ENCODE measurements at regions of chr19 and their contacts with region 1.

Region 1: DNA sequence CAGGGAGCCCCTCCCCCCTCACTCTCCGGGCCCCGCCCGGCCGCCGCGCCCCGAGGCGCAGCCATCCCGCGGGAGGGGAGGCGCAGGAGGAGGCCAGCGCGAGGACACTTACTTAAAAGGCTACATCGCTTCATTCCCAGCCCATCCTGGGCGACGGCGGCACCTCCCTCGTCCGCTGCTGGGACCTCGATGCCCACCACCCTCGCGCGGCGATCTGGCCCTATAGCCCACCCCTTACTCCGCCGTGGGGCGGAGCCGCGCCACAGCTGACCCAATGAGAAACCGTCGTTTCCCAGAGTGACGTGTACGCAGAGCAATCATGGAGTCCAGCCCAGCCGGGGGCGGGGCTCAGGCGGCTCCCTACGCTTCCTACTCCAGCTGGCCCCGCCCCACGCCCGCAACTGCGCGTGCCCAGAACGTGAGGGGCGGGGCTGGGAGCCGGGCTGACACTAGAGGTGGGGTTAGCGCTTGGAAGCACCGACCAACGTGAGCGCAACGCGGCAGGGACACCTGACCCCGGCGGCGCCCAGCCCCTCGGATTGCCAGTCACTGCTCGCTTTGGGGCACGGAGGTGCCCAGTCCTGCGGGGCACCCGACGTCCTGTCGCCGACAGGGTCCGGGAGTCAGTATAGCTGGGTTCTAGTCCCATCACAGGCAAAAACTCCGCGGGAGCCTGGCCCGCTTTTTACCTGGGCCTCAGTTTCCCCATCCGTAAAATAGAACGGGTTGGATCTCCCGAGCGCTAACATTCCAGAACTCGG is at the start of gene ANKRD27:
- DNase-seq: peak; percentile 97 to 99 (median 98)
- H3K4me3 ChIP-seq: peak within 1 kb of the TSS; percentile 75 to 81
- H3K4me3 Mint-ChIP-seq: peak within 1 kb of the TSS; percentile 91 to 98 (median 96)
- H3K27ac ChIP-seq: peak within 1 kb of the TSS; percentile 68
- H3K27ac Mint-ChIP-seq: peak within 1 kb of the TSS; percentile 77 to 95 (median 91)
- H3K4me1 ChIP-seq: peaks cover 45% of the 10 kb centered on the region
- H3K4me1 Mint-ChIP-seq: peaks cover 21 to 52% (median 35%) of the 10 kb centered on the region in 4 donors
- H3K27me3 ChIP-seq: no peaks in the 10 kb centered on the region
- H3K27me3 Mint-ChIP-seq: peaks cover 6 to 7% of the 10 kb centered on the region in 2 donors
- total RNA-seq, gene ANKRD27: 49.6 to 51.2 TPM

Region 2: DNA sequence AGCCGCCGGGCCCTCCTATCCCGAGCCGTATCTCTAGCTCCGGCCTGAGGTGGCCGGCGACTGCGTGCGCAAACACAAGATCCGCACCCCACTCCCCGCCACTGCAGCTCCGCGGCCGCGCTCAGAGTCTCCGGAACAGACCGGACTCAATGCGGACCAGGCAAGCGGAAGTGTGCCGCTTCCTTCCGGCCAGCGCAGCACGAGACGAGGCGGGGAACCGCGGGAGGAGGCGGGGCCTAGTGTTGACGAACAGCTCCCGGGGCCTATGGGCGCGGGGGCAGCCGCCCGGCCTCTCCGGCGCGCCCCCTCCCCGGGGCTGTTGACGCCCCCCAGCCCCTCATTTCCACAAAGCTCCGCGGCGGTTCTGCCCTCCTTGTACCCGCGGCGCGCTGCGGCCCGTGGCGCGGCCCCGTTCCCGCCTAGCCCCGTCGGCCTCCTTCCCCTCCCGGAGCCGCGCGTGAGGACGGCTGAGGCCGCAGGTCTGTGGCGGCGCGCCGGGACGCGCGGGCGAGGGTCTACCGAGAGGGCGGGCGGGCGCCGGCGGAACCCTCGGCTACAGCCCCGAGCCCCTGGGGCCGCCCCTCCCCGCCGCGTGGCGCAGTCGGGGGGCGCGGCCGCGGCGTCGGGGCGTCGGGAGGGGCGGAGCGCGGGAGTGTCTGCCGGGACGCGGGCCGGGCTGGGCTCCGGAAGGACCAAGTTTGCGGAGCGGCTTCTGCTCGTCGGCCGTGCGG is 269.5 kb before region 1 on chr19 and contains the start of gene DPY19L3:
- CTCF ChIA-PET with region 1: no interaction called
- POLR2A ChIA-PET with region 1: no interaction called
- intact Hi-C with region 1: loop called (anchors 1 kb)
- DNase-seq: peak; percentile 79 to 85 (median 83)
- H3K4me3 ChIP-seq: peak within 1 kb of the TSS; percentile 61 to 81
- H3K4me3 Mint-ChIP-seq: peak within 1 kb of the TSS; percentile 85 to 92 (median 88)
- H3K27ac ChIP-seq: peak within 1 kb of the TSS; percentile 50
- H3K27ac Mint-ChIP-seq: peak within 1 kb of the TSS; percentile 82 to 94 (median 90)
- H3K4me1 ChIP-seq: peaks cover 16% of the 10 kb centered on the region
- H3K4me1 Mint-ChIP-seq: peaks cover 5 to 19% (median 11%) of the 10 kb centered on the region in 4 donors
- H3K27me3 ChIP-seq: no peaks in the 10 kb centered on the region
- H3K27me3 Mint-ChIP-seq: no peaks in the 10 kb centered on the region
- total RNA-seq, gene DPY19L3: 16.9 to 17.9 TPM

Region 3: DNA sequence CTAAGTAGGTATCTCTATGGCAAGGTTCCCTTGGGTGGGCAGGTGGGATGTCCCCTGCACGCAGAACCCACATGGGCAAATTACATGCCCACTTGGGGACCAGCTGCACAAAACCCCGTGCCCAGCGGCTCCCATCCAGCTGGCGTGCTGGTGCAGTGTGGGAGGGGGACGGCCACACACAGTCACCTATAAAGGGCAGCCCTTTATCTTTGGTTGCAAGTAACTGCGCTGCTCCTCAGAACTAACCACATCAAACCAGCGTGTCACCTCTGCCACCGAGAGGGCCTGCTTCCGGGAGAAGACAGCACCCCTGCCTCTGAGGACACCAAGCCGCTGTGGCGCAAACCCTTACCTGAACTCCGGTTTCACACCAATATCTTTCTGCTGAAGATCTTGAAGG is 32.4 kb before region 1 on chr19:
- CTCF ChIA-PET with region 1: no interaction called
- POLR2A ChIA-PET with region 1: interaction called, 3 read pairs
- intact Hi-C with region 1: loop called (anchors 2 kb)
- DNase-seq: peak; percentile 73 to 81 (median 75)
- H3K4me3 ChIP-seq: peak overlapping the region in 1 of 2 donors; percentile 7
- H3K4me3 Mint-ChIP-seq: peak overlapping the region in 7 of 8 donors; percentile 51 to 80 (median 70)
- H3K27ac ChIP-seq: no peak overlapping the region
- H3K27ac Mint-ChIP-seq: peak overlapping the region; percentile 39 to 91 (median 88)
- H3K4me1 ChIP-seq: peaks cover 23% of the 10 kb centered on the region
- H3K4me1 Mint-ChIP-seq: peaks cover 14 to 42% (median 27%) of the 10 kb centered on the region in 4 donors
- H3K27me3 ChIP-seq: no peaks in the 10 kb centered on the region
- H3K27me3 Mint-ChIP-seq: no peaks in the 10 kb centered on the region

Region 4: GRCh38 chr19:32798201-32798600 is 123.1 kb after region 1 on chr19:
- CTCF ChIA-PET with region 1: interaction called, 3 read pairs
- POLR2A ChIA-PET with region 1: no interaction called
- intact Hi-C with region 1: loop called (anchors 1 kb)
- DNase-seq: no peak
- H3K4me3 ChIP-seq: no peak overlapping the region
- H3K4me3 Mint-ChIP-seq: no peak overlapping the region
- H3K27ac ChIP-seq: no peak overlapping the region
- H3K27ac Mint-ChIP-seq: peak overlapping the region in 1 of 7 donors; percentile 29
- H3K4me1 ChIP-seq: peaks cover 30% of the 10 kb centered on the region
- H3K4me1 Mint-ChIP-seq: peaks cover 36 to 55% (median 40%) of the 10 kb centered on the region in 4 donors
- H3K27me3 ChIP-seq: no peaks in the 10 kb centered on the region
- H3K27me3 Mint-ChIP-seq: no peaks in the 10 kb centered on the region

Region 5: DNA sequence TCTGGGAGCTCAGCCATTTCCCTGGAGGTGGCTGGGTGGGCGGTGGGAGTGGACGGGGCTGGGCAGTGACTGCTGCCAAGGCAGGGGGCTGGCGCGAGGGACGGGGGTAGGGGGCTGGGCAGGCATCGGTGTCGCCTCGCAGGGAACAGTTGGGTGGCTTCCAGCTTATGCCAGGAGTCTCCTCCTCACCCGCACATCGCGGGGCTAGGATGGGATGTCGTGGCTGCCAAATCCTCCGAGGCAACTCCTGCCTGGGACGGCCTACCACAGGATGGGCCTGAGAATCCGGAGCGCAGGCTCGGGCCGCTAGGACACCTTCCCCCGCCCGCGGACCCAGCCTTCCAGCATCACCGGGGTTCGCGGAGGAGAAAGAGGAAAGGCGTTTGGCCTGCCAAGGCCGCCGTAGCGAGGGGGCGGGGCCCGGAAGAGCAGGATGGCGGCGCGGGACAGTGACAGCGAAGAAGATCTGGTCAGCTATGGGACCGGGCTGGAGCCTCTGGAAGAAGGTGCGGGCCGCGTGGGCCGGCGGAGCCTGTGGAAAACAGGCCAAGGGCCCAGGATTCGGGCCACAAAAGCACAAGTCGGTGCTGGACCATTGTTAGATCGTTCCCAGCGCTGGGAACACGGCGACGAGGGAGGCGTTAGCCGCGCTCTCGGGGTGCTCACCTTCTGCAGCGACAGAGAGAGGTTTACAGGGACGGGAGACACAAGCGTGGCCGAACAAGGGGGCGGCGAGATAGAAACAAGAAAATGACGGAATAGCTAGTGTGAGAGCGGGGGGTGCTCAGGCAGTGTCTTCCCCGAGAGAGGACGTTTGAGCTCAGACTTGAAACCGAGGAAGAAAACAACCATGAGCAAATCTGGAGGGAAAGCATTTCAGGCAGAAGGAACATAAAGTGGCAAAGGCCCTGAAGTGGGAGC is 405.9 kb after region 1 on chr19 and contains the start of gene GPATCH1:
- CTCF ChIA-PET with region 1: no interaction called
- POLR2A ChIA-PET with region 1: no interaction called
- intact Hi-C with region 1: loop called (anchors 2 kb)
- DNase-seq: peak; percentile 83 to 89 (median 85)
- H3K4me3 ChIP-seq: peak within 1 kb of the TSS; percentile 72 to 98
- H3K4me3 Mint-ChIP-seq: peak within 1 kb of the TSS; percentile 92 to 99 (median 96)
- H3K27ac ChIP-seq: peak within 1 kb of the TSS; percentile 75
- H3K27ac Mint-ChIP-seq: peak within 1 kb of the TSS; percentile 89 to 98 (median 95)
- H3K4me1 ChIP-seq: peaks cover 19% of the 10 kb centered on the region
- H3K4me1 Mint-ChIP-seq: peaks cover 17 to 25% (median 18%) of the 10 kb centered on the region in 4 donors
- H3K27me3 ChIP-seq: no peaks in the 10 kb centered on the region
- H3K27me3 Mint-ChIP-seq: no peaks in the 10 kb centered on the region
- total RNA-seq, gene GPATCH1: 15.5 to 16.7 TPM